PC-9 (cell line): ENCODE measurements at regions of chr20 and their contacts with region 1.

Region 1: DNA sequence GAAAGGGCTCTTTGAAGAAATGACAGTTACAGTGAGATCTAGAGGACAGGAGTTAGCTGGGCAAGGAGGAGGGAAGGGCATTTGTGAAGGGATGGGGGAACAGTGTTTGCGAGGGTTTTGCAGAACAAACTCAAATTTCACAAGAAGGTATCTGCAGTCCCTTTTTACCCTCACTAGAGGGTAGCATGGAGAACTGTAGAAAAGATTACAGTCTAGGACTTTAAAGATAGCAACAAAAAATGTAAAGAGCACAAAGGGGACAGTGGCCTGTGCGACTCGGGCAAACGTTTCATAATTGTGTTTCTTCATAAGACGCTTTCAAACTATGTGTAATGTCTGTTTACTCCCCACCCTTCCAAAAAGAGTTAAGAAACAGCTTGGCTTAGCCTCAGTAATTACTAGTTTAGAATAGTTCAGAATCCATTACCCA is 21.2 kb upstream of the ASXL1 start:
- DNase-seq: peak in 1 of 2 experiments; percentile 37
- H3K4me3 ChIP-seq: no peak overlapping the region
- H3K27ac ChIP-seq: no peak overlapping the region
- H3K4me1 ChIP-seq: no peaks in the 10 kb centered on the region
- H3K27me3 ChIP-seq: no peaks in the 10 kb centered on the region
- CTCF ChIP-seq: peak; percentile 63

Region 2: GRCh38 chr20:32091888-32092346 is 245.0 kb before region 1 on chr20:
- CTCF ChIA-PET with region 1: no interaction called
- POLR2A ChIA-PET with region 1: no interaction called
- intact Hi-C with region 1: no loop called
- DNase-seq: peak; percentile 59 to 83
- H3K4me3 ChIP-seq: no peak overlapping the region
- H3K27ac ChIP-seq: no peak overlapping the region
- H3K4me1 ChIP-seq: no peaks in the 10 kb centered on the region
- H3K27me3 ChIP-seq: peaks cover 40% of the 10 kb centered on the region
- CTCF ChIP-seq: peak; percentile 91

Region 3: GRCh38 chr20:32207626-32208498 is 129.1 kb before region 1 on chr20 and contains the starts of genes PLAGL2 and POFUT1:
- CTCF ChIA-PET with region 1: no interaction called
- POLR2A ChIA-PET with region 1: no interaction called
- intact Hi-C with region 1: loop called (anchors 5 kb)
- DNase-seq: peak; percentile 56 to 94
- H3K4me3 ChIP-seq: peak within 1 kb of the TSS; percentile 95
- H3K27ac ChIP-seq: peak within 1 kb of the TSS; percentile 35; the same call in 1 of the 2 replicates
- H3K4me1 ChIP-seq: peaks cover 41% of the 10 kb centered on the region
- H3K27me3 ChIP-seq: no peaks in the 10 kb centered on the region
- CTCF ChIP-seq: no peak; the same call in 1 of the 2 replicates
- total RNA-seq, gene PLAGL2: 17.5 and 23.8 TPM in 2 replicates
- total RNA-seq, gene POFUT1: 38.1 and 51.3 TPM in 2 replicates

Region 4: GRCh38 chr20:32218156-32218900 is 118.6 kb before region 1 on chr20:
- CTCF ChIA-PET with region 1: no interaction called
- POLR2A ChIA-PET with region 1: interaction called, 12 read pairs
- intact Hi-C with region 1: no loop called
- DNase-seq: no peak
- H3K4me3 ChIP-seq: no peak overlapping the region
- H3K27ac ChIP-seq: no peak overlapping the region
- H3K4me1 ChIP-seq: no peaks in the 10 kb centered on the region
- H3K27me3 ChIP-seq: no peaks in the 10 kb centered on the region
- CTCF ChIP-seq: no peak

Region 5: DNA sequence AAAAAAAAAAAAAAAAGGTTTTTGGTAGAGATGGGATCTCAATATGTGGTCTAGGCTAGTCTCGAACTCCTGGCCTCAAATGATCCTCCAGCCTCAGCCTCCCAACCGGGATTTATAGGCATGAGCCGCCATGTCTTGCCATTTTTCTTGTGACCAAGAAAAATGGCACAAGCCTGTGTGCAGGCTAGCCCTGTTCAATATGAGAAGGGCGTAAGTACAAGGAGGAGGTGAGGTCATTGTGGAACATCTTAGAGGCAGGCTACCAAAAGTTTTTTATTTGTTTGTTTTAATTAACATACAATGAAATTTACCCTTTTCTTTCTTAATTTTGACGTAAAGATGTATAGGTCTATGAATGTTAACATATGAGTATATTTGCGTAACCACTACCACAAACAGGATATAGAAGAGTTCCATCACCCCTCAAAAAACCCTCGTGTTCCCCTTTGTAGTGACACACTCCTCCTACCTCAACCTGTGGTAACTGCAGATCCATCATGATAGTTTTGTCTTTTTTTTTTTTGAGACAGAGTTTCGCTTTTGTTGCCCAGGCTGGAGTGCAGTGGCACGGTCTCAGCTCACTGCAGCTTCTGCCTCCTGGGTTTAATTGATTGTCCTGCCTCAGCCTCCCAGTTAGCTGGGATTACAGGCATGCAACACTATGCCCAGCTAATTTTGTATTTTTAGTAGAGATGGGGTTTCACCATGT is 87.7 kb before region 1 on chr20:
- CTCF ChIA-PET with region 1: no interaction called
- POLR2A ChIA-PET with region 1: no interaction called
- intact Hi-C with region 1: no loop called
- DNase-seq: no peak
- H3K4me3 ChIP-seq: no peak overlapping the region
- H3K27ac ChIP-seq: no peak overlapping the region
- H3K4me1 ChIP-seq: peaks cover 9% of the 10 kb centered on the region; the same call in 1 of the 2 replicates
- H3K27me3 ChIP-seq: no peaks in the 10 kb centered on the region
- CTCF ChIP-seq: no peak

Region 6: GRCh38 chr20:32277361-32278198 is 59.4 kb before region 1 on chr20 and contains the start of gene KIF3B:
- CTCF ChIA-PET with region 1: no interaction called
- POLR2A ChIA-PET with region 1: no interaction called
- intact Hi-C with region 1: loop called (anchors 5 kb)
- DNase-seq: peak; percentile 72 to 90
- H3K4me3 ChIP-seq: peak within 1 kb of the TSS; percentile 98
- H3K27ac ChIP-seq: no peak within 1 kb of the TSS
- H3K4me1 ChIP-seq: peaks cover 7% of the 10 kb centered on the region; the same call in 1 of the 2 replicates
- H3K27me3 ChIP-seq: no peaks in the 10 kb centered on the region
- CTCF ChIP-seq: no peak
- total RNA-seq, gene KIF3B: 41.4 and 52.3 TPM in 2 replicates

Region 7: GRCh38 chr20:32484958-32485769 is 148.2 kb after region 1 on chr20:
- CTCF ChIA-PET with region 1: no interaction called
- POLR2A ChIA-PET with region 1: no interaction called
- intact Hi-C with region 1: loop called (anchors 2 kb)
- DNase-seq: peak; percentile 59 to 72
- H3K4me3 ChIP-seq: peak overlapping the region; percentile 82
- H3K27ac ChIP-seq: peak overlapping the region; percentile 41; the same call in 1 of the 2 replicates
- H3K4me1 ChIP-seq: peaks cover 13% of the 10 kb centered on the region
- H3K27me3 ChIP-seq: no peaks in the 10 kb centered on the region
- CTCF ChIP-seq: peak; percentile 83